HCT116 (cell line): ENCODE measurements at regions of chr6 and their contacts with region 1.

Region 1: DNA sequence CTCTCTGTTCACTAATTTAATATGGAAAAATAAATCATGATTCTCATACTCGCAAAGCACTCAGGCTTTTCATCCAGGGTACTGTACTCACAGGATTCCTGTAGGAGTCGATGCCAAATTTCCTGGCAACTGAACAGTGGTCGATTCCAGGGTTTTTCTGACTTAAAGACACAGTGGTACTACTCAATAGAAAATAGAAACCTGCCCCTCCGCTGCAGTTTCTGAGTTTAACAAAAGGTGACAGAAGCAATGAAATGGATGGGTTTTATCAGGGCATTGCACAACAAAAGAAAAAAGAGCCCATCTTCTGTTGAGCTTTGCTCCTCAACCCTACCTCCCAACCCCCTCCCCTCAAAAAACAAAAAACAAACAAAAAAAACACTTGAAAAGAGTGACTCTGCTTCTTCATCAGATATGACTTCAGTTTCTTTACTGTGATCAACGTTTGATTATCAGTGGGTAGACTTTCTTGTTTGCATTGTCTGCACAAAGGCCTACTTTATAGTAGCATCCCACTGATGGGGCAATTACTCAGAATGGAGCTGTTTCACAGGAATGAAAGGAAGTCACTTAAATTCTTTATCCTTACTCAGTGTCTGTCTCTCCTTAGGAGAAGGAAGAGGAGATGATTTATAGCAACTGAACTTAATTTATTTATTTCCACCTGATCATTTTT is 96.2 kb upstream of the FOXO3 start:
- DNase-seq: no peak
- ATAC-seq: no peak
- H3K4me3 ChIP-seq: no peak overlapping the region
- H3K27ac ChIP-seq: no peak overlapping the region
- H3K4me1 ChIP-seq: peaks cover 6 to 17% of the 10 kb centered on the region in 2 experiments
- H3K27me3 ChIP-seq: no peaks in the 10 kb centered on the region
- CTCF ChIP-seq: no peak
- POLR2A ChIP-seq: no peak
- RAD21 ChIP-seq: no peak

Region 2: GRCh38 chr6:108432792-108433191 is 31.8 kb before region 1 on chr6:
- CTCF ChIA-PET with region 1: no interaction called
- POLR2A ChIA-PET with region 1: no interaction called
- RAD21 ChIA-PET with region 1: no interaction called
- intact Hi-C with region 1: no loop called
- DNase-seq: no peak
- ATAC-seq: no peak
- H3K4me3 ChIP-seq: no peak overlapping the region
- H3K27ac ChIP-seq: no peak overlapping the region
- H3K4me1 ChIP-seq: no peaks in the 10 kb centered on the region
- H3K27me3 ChIP-seq: no peaks in the 10 kb centered on the region
- CTCF ChIP-seq: no peak
- POLR2A ChIP-seq: no peak
- RAD21 ChIP-seq: no peak

Region 3: GRCh38 chr6:108453597-108454185 is 10.9 kb before region 1 on chr6:
- CTCF ChIA-PET with region 1: no interaction called
- POLR2A ChIA-PET with region 1: no interaction called
- RAD21 ChIA-PET with region 1: no interaction called
- intact Hi-C with region 1: loop called (anchors 1 kb)
- DNase-seq: no peak
- ATAC-seq: no peak
- H3K4me3 ChIP-seq: no peak overlapping the region
- H3K27ac ChIP-seq: no peak overlapping the region
- H3K4me1 ChIP-seq: no peaks in the 10 kb centered on the region
- H3K27me3 ChIP-seq: no peaks in the 10 kb centered on the region
- CTCF ChIP-seq: no peak
- POLR2A ChIP-seq: no peak
- RAD21 ChIP-seq: no peak

Region 4: GRCh38 chr6:109139109-109139508 is 674.6 kb after region 1 on chr6:
- CTCF ChIA-PET with region 1: no interaction called
- POLR2A ChIA-PET with region 1: no interaction called
- RAD21 ChIA-PET with region 1: no interaction called
- intact Hi-C with region 1: no loop called
- DNase-seq: no peak
- ATAC-seq: no peak
- H3K4me3 ChIP-seq: no peak overlapping the region
- H3K27ac ChIP-seq: no peak overlapping the region
- H3K4me1 ChIP-seq: no peaks in the 10 kb centered on the region
- H3K27me3 ChIP-seq: no peaks in the 10 kb centered on the region
- CTCF ChIP-seq: no peak
- POLR2A ChIP-seq: no peak
- RAD21 ChIP-seq: no peak